ENCODE measurements at regions of chr13 and their contacts with region 1.

Region 1: DNA sequence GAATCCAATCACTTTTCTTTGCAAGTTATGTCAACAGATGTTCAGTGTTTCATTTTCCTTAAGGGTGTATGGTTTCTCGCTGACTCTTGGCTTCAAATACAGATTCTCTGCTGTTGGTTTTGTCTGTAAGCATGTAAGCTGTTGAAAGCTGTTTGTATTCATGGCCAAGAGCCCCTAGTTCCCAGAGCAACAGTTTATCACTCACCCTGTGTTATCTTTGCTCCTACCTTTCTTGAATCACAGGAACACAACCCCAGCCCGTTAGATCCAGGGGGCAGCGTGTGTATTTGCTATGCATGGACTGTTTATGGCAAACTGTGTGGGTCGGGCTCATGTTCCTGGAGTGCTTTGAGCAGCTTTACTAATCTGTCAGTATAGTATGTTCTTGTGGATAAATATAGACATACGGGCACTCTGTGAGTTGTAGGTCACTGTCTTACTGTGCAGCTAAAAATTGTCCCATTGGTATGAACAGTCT is 28.9 kb downstream of the FRY start:
- DNase-seq: no peak
- H3K4me3 ChIP-seq: no peak overlapping the region
- H3K27ac ChIP-seq: no peak overlapping the region
- H3K4me1 ChIP-seq: no peaks in the 10 kb centered on the region
- H3K27me3 ChIP-seq: no peaks in the 10 kb centered on the region
- CTCF ChIP-seq: no peak

Region 2: DNA sequence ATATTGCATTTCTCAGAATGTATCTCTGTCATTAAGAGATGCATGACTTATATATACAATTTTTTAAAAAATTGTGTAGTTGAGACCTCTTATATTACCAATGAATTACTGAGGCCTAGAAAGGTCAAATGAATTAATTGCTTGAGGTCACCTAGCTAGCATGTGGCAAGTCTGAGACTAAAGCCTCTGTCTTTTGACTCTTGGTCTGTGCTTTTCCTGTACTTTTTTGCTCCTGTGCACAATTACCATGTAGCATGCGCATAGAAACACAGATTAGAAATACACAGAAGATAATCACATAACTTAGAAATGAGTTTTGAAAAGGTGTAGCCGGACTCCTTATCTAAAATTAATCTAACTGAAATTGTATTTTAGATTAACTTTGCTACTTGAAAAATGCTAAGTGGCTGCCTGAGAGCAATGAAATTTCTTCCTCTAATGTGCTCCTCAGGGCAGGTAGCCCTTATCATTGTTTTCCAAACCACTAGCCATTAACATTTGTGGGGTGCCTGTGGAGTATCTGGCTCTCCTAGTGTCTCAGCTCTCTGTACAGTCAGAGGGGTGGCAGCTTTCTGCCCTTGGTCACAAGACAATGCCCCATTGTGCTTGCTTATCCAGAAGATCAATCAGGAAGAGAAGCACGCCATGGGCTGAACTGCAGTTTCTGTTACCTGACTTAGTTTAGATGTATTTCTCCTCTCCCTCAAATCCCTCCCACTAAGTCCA is 1877.1 kb after region 1 on chr13:
- CTCF ChIA-PET with region 1: no interaction called
- POLR2A ChIA-PET with region 1: interaction called, 15 read pairs
- intact Hi-C with region 1: no loop called
- DNase-seq: peak; percentile 15 to 35
- H3K4me3 ChIP-seq: no peak overlapping the region
- H3K27ac ChIP-seq: no peak overlapping the region
- H3K4me1 ChIP-seq: no peaks in the 10 kb centered on the region
- H3K27me3 ChIP-seq: no peaks in the 10 kb centered on the region
- CTCF ChIP-seq: no peak

Measured in PC-9 (cell line).